Activated CD8-positive, alpha-beta T cell treated with anti-CD3 and anti-CD28 coated beads for 36 hours (primary cell): ENCODE measurements at regions of chr17 and their contacts with region 1.

Region 1: GRCh38 chr17:8041249-8041928 is 2.5 kb downstream of the ALOX15B start:
- DNase-seq: peak; percentile 68
- ATAC-seq: peak; percentile 67
- H3K4me3 Mint-ChIP-seq: no peak overlapping the region
- H3K27ac Mint-ChIP-seq: no peak overlapping the region
- H3K4me1 Mint-ChIP-seq: peaks cover 4% of the 10 kb centered on the region
- H3K27me3 Mint-ChIP-seq: peaks cover 18% of the 10 kb centered on the region
- CTCF ChIP-seq: peak; percentile 72

Region 2: GRCh38 chr17:7915611-7916382 is 125.6 kb before region 1 on chr17 and contains the start of gene RNF227:
- CTCF ChIA-PET with region 1: interaction called, 24 read pairs
- POLR2A ChIA-PET with region 1: interaction called, 3 read pairs
- intact Hi-C with region 1: no loop called
- DNase-seq: peak; percentile 94
- ATAC-seq: peak; percentile 87
- H3K4me3 Mint-ChIP-seq: peak within 1 kb of the TSS; percentile 85
- H3K27ac Mint-ChIP-seq: peak within 1 kb of the TSS; percentile 87
- H3K4me1 Mint-ChIP-seq: peaks cover 22% of the 10 kb centered on the region
- H3K27me3 Mint-ChIP-seq: no peaks in the 10 kb centered on the region
- CTCF ChIP-seq: no peak
- total RNA-seq, gene RNF227: 5.1 to 5.2 TPM

Region 3: DNA sequence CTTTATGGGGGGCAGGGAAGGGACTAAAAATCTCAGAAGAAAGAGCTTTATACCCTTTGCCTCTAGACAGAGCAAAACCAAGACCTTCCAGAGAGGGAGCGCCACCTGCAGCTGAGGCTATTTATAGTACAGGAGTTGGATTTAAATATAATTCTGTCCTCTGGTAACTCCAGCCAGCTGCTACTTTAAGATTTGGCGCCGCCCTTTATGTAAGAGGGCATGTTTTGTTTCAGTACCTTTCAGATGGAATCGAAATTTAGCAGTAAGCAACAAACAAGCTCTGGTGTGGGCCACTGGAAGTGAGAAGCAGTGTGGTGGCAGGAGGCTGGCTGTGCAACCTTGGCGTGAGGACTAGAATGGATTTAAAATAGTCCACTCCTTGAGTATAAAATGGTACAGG is 44.2 kb before region 1 on chr17:
- CTCF ChIA-PET with region 1: interaction called, 11 read pairs
- POLR2A ChIA-PET with region 1: no interaction called
- intact Hi-C with region 1: no loop called
- DNase-seq: peak; percentile 74
- ATAC-seq: peak; percentile 87
- H3K4me3 Mint-ChIP-seq: no peak overlapping the region
- H3K27ac Mint-ChIP-seq: no peak overlapping the region
- H3K4me1 Mint-ChIP-seq: peaks cover 11% of the 10 kb centered on the region
- H3K27me3 Mint-ChIP-seq: peaks cover 19% of the 10 kb centered on the region
- CTCF ChIP-seq: peak; percentile 56

Region 4: GRCh38 chr17:8022360-8023003 is 18.9 kb before region 1 on chr17:
- CTCF ChIA-PET with region 1: interaction called, 65 read pairs
- POLR2A ChIA-PET with region 1: no interaction called
- intact Hi-C with region 1: no loop called
- DNase-seq: no peak
- ATAC-seq: no peak
- H3K4me3 Mint-ChIP-seq: no peak overlapping the region
- H3K27ac Mint-ChIP-seq: no peak overlapping the region
- H3K4me1 Mint-ChIP-seq: peaks cover 6% of the 10 kb centered on the region
- H3K27me3 Mint-ChIP-seq: peaks cover 8% of the 10 kb centered on the region
- CTCF ChIP-seq: no peak

Region 5: GRCh38 chr17:8073627-8074484 is 32.5 kb after region 1 on chr17:
- CTCF ChIA-PET with region 1: interaction called, 15 read pairs
- POLR2A ChIA-PET with region 1: no interaction called
- intact Hi-C with region 1: no loop called
- DNase-seq: peak; percentile 88
- ATAC-seq: peak; percentile 92
- H3K4me3 Mint-ChIP-seq: peak overlapping the region; percentile 69
- H3K27ac Mint-ChIP-seq: peak overlapping the region; percentile 46
- H3K4me1 Mint-ChIP-seq: peaks cover 19% of the 10 kb centered on the region
- H3K27me3 Mint-ChIP-seq: peaks cover 39% of the 10 kb centered on the region
- CTCF ChIP-seq: peak; percentile 86